ENCODE measurements at regions of chr21 and their contacts with region 1.

Region 1: GRCh38 chr21:24375201-24375600 is 1232.1 kb downstream of the MRPL39 start:
- DNase-seq: peak in 1 of 3 donors; percentile 7
- ATAC-seq: no peak
- H3K4me3 ChIP-seq: no peak overlapping the region
- H3K4me1 ChIP-seq: no peaks in the 10 kb centered on the region
- CTCF ChIP-seq: no peak

Region 2: GRCh38 chr21:24436236-24436635 is 61.0 kb after region 1 on chr21:
- intact Hi-C with region 1: loop called in 1 of 2 experiments (anchors 10 kb)
- DNase-seq: no peak
- ATAC-seq: no peak
- H3K4me3 ChIP-seq: no peak overlapping the region
- H3K4me1 ChIP-seq: no peaks in the 10 kb centered on the region
- CTCF ChIP-seq: no peak